ENCODE measurements at regions of chr3 and their contacts with region 1.

Region 1: GRCh38 chr3:46078712-46079400 is 51.6 kb upstream of the XCR1 start:
- DNase-seq: peak; percentile 82 to 92 (median 85)
- H3K4me3 ChIP-seq: no peak overlapping the region
- H3K4me3 Mint-ChIP-seq: peak overlapping the region in 5 of 7 donors; percentile 1 to 71 (median 52)
- H3K27ac ChIP-seq: no peak overlapping the region
- H3K27ac Mint-ChIP-seq: peak overlapping the region in 7 of 8 donors; percentile 3 to 87 (median 44)
- H3K4me1 ChIP-seq: peaks cover 12% of the 10 kb centered on the region
- H3K4me1 Mint-ChIP-seq: peaks cover 22 to 43% (median 22%) of the 10 kb centered on the region in 3 donors
- H3K27me3 ChIP-seq: no peaks in the 10 kb centered on the region
- H3K27me3 Mint-ChIP-seq: no peaks in the 10 kb centered on the region

Region 2: DNA sequence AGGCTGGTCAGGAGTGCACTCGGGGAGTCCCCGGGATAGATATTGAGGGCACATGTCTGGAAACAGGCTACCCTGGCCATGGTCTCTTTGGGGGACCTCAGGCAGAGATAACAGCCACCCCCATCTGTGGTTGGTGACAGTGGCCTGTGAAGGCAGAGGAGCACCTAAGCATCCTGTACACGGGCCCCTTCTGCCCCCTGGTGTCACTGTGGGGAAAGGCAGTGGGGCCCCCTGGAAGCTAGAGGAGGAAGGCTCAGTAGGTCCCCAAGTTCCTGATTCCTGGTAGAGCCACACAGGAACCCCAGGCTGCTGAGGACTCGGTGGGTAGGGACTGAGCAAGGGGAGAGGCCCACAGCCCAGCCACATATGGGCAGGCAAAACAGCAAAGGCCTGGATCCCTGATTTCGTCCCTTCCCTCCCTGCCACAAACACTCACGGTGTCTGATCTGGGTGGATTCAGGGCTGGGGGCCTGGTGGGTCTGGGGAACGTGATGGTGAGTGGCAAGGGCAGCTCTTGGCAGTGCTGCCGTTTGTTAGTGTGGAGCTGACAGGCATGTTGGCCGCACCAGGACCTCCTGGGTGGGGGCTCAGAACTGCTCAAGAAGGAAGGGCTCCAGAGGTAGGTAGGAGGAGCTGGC is 149.7 kb before region 1 on chr3:
- CTCF ChIA-PET with region 1: interaction called, 295 read pairs
- POLR2A ChIA-PET with region 1: no interaction called
- DNase-seq: peak; percentile 50 to 75 (median 51)
- H3K4me3 ChIP-seq: no peak overlapping the region
- H3K4me3 Mint-ChIP-seq: peak overlapping the region in 1 of 7 donors; percentile 63
- H3K27ac ChIP-seq: no peak overlapping the region
- H3K27ac Mint-ChIP-seq: peak overlapping the region in 6 of 8 donors; percentile 28 to 92 (median 53)
- H3K4me1 ChIP-seq: peaks cover 3% of the 10 kb centered on the region
- H3K4me1 Mint-ChIP-seq: peaks cover 10 to 18% (median 15%) of the 10 kb centered on the region in 3 donors
- H3K27me3 ChIP-seq: no peaks in the 10 kb centered on the region
- H3K27me3 Mint-ChIP-seq: no peaks in the 10 kb centered on the region

Region 3: GRCh38 chr3:45948311-45948781 is 130.5 kb before region 1 on chr3:
- CTCF ChIA-PET with region 1: interaction called, 295 read pairs
- POLR2A ChIA-PET with region 1: interaction called, 7 read pairs
- DNase-seq: no peak
- H3K4me3 ChIP-seq: no peak overlapping the region
- H3K4me3 Mint-ChIP-seq: peak overlapping the region; percentile 19 to 94 (median 73)
- H3K27ac ChIP-seq: no peak overlapping the region
- H3K27ac Mint-ChIP-seq: peak overlapping the region; percentile 69 to 95 (median 92)
- H3K4me1 ChIP-seq: peaks cover 93% of the 10 kb centered on the region
- H3K4me1 Mint-ChIP-seq: peaks cover 95 to 99% (median 99%) of the 10 kb centered on the region in 3 donors
- H3K27me3 ChIP-seq: no peaks in the 10 kb centered on the region
- H3K27me3 Mint-ChIP-seq: no peaks in the 10 kb centered on the region

Region 4: GRCh38 chr3:45968706-45969105 is 110.2 kb before region 1 on chr3:
- CTCF ChIA-PET with region 1: interaction called, 64 read pairs
- POLR2A ChIA-PET with region 1: no interaction called
- DNase-seq: no peak
- H3K4me3 ChIP-seq: no peak overlapping the region
- H3K4me3 Mint-ChIP-seq: peak overlapping the region in 4 of 7 donors; percentile 44 to 83 (median 53)
- H3K27ac ChIP-seq: no peak overlapping the region
- H3K27ac Mint-ChIP-seq: peak overlapping the region in 7 of 8 donors; percentile 60 to 94 (median 80)
- H3K4me1 ChIP-seq: peaks cover 82% of the 10 kb centered on the region
- H3K4me1 Mint-ChIP-seq: peaks cover 89 to 96% (median 94%) of the 10 kb centered on the region in 3 donors
- H3K27me3 ChIP-seq: no peaks in the 10 kb centered on the region
- H3K27me3 Mint-ChIP-seq: no peaks in the 10 kb centered on the region

Region 5: GRCh38 chr3:46027736-46028397 is 51.0 kb before region 1 on chr3:
- CTCF ChIA-PET with region 1: interaction called, 10 read pairs
- POLR2A ChIA-PET with region 1: no interaction called
- DNase-seq: no peak
- H3K4me3 ChIP-seq: no peak overlapping the region
- H3K4me3 Mint-ChIP-seq: no peak overlapping the region
- H3K27ac ChIP-seq: no peak overlapping the region
- H3K27ac Mint-ChIP-seq: no peak overlapping the region
- H3K4me1 ChIP-seq: no peaks in the 10 kb centered on the region
- H3K4me1 Mint-ChIP-seq: no peaks in the 10 kb centered on the region
- H3K27me3 ChIP-seq: no peaks in the 10 kb centered on the region
- H3K27me3 Mint-ChIP-seq: peaks cover 0 to 1% of the 10 kb centered on the region in 2 donors

Region 6: DNA sequence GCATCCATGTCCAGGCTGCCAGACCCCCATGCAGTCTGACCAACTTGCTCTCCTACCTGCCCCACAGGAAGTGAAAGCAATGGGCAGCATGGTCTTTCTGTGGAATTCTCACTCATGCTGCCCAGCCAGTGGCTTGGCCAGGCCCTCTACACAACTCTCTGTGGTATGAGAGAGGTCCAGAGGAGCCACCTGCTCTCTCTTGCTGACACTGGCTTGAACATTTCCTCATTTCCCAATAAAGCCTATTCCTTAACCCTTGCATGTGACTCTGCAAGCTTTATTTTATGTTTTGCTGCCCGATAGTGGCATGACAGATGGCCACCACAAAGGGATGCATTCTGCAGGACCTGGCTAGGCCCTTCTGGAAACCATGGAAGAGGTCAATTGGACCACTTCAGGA is 75.5 kb after region 1 on chr3:
- CTCF ChIA-PET with region 1: no interaction called
- POLR2A ChIA-PET with region 1: no interaction called
- DNase-seq: no peak
- H3K4me3 ChIP-seq: no peak overlapping the region
- H3K4me3 Mint-ChIP-seq: peak overlapping the region in 1 of 7 donors; percentile 25
- H3K27ac ChIP-seq: no peak overlapping the region
- H3K27ac Mint-ChIP-seq: peak overlapping the region in 2 of 8 donors; percentile 17 to 47
- H3K4me1 ChIP-seq: peaks cover 10% of the 10 kb centered on the region
- H3K4me1 Mint-ChIP-seq: peaks cover 17 to 19% (median 18%) of the 10 kb centered on the region in 3 donors
- H3K27me3 ChIP-seq: no peaks in the 10 kb centered on the region
- H3K27me3 Mint-ChIP-seq: no peaks in the 10 kb centered on the region

Region 7: GRCh38 chr3:46200211-46200610 is 121.4 kb after region 1 on chr3:
- CTCF ChIA-PET with region 1: no interaction called
- POLR2A ChIA-PET with region 1: no interaction called
- DNase-seq: no peak
- H3K4me3 ChIP-seq: no peak overlapping the region
- H3K4me3 Mint-ChIP-seq: no peak overlapping the region
- H3K27ac ChIP-seq: no peak overlapping the region
- H3K27ac Mint-ChIP-seq: peak overlapping the region in 4 of 8 donors; percentile 3 to 85 (median 44)
- H3K4me1 ChIP-seq: no peaks in the 10 kb centered on the region
- H3K4me1 Mint-ChIP-seq: peaks cover 5 to 11% (median 10%) of the 10 kb centered on the region in 3 donors
- H3K27me3 ChIP-seq: no peaks in the 10 kb centered on the region
- H3K27me3 Mint-ChIP-seq: no peaks in the 10 kb centered on the region